ENCODE measurements at regions of chr16 and their contacts with region 1.

Region 1: GRCh38 chr16:69396187-69397061 is 10.6 kb upstream of the TERF2 start:
- ATAC-seq: peak; percentile 62 to 84 (median 70)
- H3K4me3 ChIP-seq: no peak overlapping the region
- H3K27ac ChIP-seq: peak overlapping the region in 1 of 2 donors; percentile 59
- H3K4me1 ChIP-seq: peaks cover 6 to 8% of the 10 kb centered on the region in 2 donors

Region 2: GRCh38 chr16:69691980-69692911 is 295.8 kb after region 1 on chr16:
- in situ Hi-C with region 1: no loop called
- ATAC-seq: peak in 2 of 8 experiments; percentile 71 to 83
- H3K4me3 ChIP-seq: no peak overlapping the region
- H3K27ac ChIP-seq: no peak overlapping the region
- H3K4me1 ChIP-seq: no peaks in the 10 kb centered on the region

Region 3: GRCh38 chr16:69754469-69755310 is 358.3 kb after region 1 on chr16 and contains the start of gene NOB1:
- in situ Hi-C with region 1: loop called in 2 of 9 experiments (anchors 25 kb)
- ATAC-seq: peak; percentile 97 to 99 (median 99)
- H3K4me3 ChIP-seq: peak within 1 kb of the TSS; percentile 76 to 98 (median 92)
- H3K27ac ChIP-seq: peak within 1 kb of the TSS; percentile 73 to 85
- H3K4me1 ChIP-seq: peaks cover 6 to 7% of the 10 kb centered on the region in 2 donors
- total RNA-seq, gene NOB1: 15.5 to 88.8 (median 35.1) TPM

Region 4: GRCh38 chr16:69761983-69762813 is 365.8 kb after region 1 on chr16 and contains the start of gene WWP2:
- in situ Hi-C with region 1: loop called in 2 of 9 experiments (anchors 10 to 25 kb)
- ATAC-seq: peak; percentile 82 to 96 (median 92)
- H3K4me3 ChIP-seq: peak within 1 kb of the TSS; percentile 73 to 98 (median 79)
- H3K27ac ChIP-seq: peak within 1 kb of the TSS; percentile 61 to 80
- H3K4me1 ChIP-seq: peaks cover 0 to 10% of the 10 kb centered on the region in 2 donors
- total RNA-seq, gene WWP2: 10.7 to 28.6 (median 16.0) TPM

Measured in motor neuron (in vitro differentiated cells).